SK-N-SH (cell line): ENCODE measurements at regions of chr17 and their contacts with region 1.

Region 1: DNA sequence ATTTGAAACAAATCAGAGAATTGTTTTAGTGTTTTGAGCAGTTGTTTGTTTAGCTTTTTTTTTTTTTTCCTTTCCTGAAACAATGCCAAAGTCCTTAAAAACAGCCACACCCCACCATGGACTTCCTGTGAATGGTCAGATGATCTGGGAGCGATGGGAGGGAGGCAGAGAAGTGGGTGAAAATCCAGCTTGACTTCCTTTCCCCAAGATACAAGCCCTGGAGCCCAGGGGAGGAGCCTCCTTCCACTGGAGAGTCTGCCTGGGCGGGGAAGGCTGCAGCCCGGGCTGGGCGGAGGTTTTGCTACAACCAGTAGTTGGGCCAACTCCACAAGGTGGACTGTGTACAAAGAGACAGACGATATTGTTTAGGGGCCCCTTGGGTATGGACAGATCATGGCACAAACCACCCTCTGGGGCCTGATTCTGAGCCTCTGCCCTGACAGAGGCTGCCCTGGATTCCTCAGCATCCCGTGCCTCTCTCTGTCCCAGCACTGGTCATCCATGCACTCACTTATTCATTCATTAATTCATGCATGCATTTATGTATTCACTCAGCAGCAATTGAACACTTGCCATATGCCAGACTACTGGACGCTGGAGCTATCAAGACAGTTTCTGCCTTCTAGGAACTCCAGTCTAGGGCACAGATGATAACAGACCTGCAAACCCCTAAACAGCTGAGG is 29.8 kb downstream of the WSB1 start:
- DNase-seq: no peak
- H3K4me3 ChIP-seq: no peak overlapping the region
- H3K27ac ChIP-seq: no peak overlapping the region
- H3K4me1 ChIP-seq: peaks cover 0 to 22% of the 10 kb centered on the region in 2 experiments; a peak in 1 of 4 replicates
- H3K27me3 ChIP-seq: no peaks in the 10 kb centered on the region
- CTCF ChIP-seq: no peak
- EP300 ChIP-seq: no peak
- RAD21 ChIP-seq: no peak

Region 2: DNA sequence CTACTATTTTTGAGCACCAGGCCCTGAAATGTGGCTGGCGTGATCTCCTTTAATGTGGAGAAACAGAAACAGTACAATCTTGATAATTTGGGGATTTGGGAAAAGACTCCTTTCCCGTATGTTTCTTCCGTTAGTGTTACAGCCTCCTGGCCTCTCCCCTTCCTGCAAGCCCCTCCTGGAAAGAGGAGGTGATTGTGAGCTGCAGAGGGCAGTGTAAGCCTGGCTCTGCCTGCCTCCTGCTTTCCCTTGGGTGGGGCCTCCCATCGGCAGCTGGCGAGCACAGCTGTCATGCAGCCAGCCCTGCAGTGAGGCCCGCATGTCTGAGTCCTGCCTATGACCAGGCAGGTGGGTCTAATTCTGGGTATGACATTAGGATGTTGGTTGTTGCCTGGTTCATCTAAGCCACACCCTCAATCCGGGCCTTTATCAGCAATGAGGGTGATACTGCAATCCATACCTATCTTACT is 78.4 kb before region 1 on chr17:
- CTCF ChIA-PET with region 1: interaction called, 12 read pairs
- POLR2A ChIA-PET with region 1: interaction called, 4 read pairs
- DNase-seq: peak; percentile 84
- H3K4me3 ChIP-seq: no peak overlapping the region; a peak in 1 of 4 replicates
- H3K27ac ChIP-seq: no peak overlapping the region
- H3K4me1 ChIP-seq: peaks cover 0 to 12% of the 10 kb centered on the region in 2 experiments; a peak in 1 of 4 replicates
- H3K27me3 ChIP-seq: peaks cover 6% of the 10 kb centered on the region; the same call in 1 of the 2 replicates
- CTCF ChIP-seq: peak; percentile 62
- EP300 ChIP-seq: no peak
- RAD21 ChIP-seq: peak; percentile 94

Region 3: DNA sequence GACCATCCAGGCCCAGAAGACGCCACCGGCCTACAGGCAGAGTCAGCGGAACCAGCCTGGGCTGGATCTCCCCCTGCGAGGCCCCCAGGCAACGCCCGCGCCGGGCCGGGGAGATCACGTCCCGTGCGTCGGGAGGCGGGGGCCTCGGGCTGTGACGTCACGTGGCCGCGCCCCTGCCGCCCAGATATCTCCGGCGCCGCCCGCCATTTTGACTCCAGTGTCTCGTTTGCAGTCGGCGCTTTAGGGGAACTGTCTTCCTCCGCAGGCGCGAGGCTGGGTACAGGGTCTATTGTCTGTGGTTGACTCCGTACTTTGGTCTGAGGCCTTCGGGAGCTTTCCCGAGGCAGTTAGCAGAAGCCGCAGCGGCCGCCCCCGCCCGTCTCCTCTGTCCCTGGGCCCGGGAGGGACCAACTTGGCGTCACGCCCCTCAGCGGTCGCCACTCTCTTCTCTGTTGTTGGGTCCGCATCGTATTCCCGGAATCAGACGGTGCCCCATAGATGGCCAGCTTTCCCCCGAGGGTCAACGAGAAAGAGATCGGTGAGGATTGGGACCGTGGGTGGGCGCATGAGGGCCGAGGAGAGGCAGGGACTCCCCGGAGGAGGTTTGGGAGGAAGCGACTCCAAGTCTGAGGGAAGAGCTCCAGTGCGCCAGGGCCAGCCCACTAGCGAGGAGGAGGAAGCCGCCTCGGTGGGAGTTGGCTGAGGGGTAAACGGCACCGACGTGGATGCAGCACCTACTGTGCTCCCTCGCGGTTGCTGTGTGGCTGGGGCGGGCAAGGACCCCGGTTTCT is 29.6 kb before region 1 on chr17 and contains the start of gene WSB1:
- CTCF ChIA-PET with region 1: interaction called, 4 read pairs
- POLR2A ChIA-PET with region 1: interaction called, 14 read pairs
- DNase-seq: peak; percentile 99
- H3K4me3 ChIP-seq: peak within 1 kb of the TSS; percentile 78 to 87
- H3K27ac ChIP-seq: peak within 1 kb of the TSS; percentile 91 to 99
- H3K4me1 ChIP-seq: peaks cover 5 to 12% of the 10 kb centered on the region in 2 experiments; a peak in 3 of 4 replicates
- H3K27me3 ChIP-seq: no peaks in the 10 kb centered on the region
- CTCF ChIP-seq: peak; percentile 13; the same call in 1 of the 2 replicates
- EP300 ChIP-seq: no peak
- RAD21 ChIP-seq: no peak
- polyA plus RNA-seq, gene WSB1: 204 and 261 TPM in 2 replicates